ENCODE measurements at regions of chr15 and their contacts with region 1.

Region 1: DNA sequence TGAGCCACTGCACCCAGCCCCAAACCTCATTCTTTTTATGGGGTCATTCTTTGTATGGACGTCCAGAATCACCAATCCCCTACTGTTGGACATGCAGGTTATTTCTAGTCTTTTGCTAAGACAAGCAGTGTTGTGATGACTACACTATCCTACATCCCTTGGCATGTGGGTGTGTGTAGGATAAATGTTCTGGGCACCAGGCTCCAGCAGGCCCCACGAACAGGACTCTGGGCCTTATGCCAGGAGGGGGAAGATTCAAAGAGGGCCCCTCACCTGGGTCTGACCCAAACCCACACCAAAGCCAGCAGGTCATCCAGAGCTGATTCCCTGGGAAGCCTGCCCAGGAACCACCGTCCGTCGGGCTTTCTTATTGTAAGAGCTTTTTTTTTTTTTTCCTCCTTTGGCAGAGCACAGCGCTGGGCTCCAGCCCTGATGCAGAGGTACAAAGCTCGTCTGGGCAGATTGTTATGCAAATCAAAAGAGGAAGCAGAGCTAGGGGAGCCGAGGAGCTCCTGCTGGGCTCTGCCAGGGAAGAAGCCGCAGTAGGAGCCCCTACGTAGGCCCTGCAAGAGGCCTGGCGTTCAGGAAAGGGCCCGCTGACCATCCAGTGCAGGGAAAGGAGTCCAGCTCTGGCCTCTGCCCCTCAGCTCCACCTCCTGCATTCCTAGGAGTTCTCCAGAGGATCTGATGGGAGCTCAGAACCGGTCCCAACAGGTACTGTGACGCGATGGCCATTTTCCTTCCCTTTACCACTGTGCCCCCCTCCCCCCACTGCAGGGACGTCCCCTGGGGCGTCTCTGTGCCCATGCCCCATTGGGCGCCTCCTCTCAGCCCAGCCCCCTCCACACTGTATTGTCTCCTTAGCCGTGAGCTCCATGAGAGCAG is 29.0 kb upstream of the FURIN start:
- DNase-seq: no peak
- ATAC-seq: peak; percentile 52 to 75 (median 68)
- H3K4me3 ChIP-seq: peak overlapping the region in 3 of 12 donors; percentile 13 to 45 (median 15)
- H3K27ac ChIP-seq: peak overlapping the region in 1 of 12 donors; percentile 88
- H3K4me1 ChIP-seq: peaks cover 0 to 44% (median 0%) of the 10 kb centered on the region in 12 donors
- H3K27me3 ChIP-seq: no peaks in the 10 kb centered on the region
- CTCF ChIP-seq: no peak
- POLR2A ChIP-seq: no peak

Region 2: DNA sequence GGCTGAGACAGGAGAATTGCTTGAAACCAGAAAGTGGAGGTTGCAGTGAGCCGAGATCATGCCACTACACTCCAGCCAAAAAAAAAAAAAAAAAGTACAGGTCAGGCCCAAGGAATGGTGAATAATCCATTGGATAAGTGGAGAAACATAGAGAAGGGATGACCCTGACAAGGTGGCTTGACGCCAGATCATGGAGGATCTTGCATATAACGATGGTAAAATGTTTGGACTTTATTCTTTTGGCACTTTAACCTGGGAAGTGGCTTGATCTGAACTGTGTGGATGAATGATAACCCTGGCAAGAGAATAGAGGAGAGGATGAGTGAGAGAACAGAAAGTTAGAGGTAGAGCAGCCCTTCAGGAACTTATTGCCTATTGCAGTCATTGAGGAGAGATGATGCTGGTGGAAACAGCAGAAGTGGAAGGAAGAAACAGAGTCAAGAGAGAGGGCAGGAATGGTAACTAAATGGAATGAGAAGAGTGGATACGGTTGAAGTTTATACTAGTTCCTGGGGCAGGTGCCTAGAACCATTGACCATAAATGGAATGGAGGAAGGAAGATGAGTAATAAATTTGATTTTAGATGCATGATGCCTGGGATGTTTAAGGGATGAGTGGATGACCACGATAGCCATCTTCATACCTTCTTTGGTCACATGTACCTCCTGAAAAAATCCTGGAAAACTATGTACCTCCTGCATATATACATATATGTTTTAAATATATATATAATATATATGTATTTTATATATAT is 64.5 kb before region 1 on chr15:
- intact Hi-C with region 1: loop called in 1 of 10 experiments (anchors 10 kb)
- DNase-seq: no peak
- ATAC-seq: no peak
- H3K4me3 ChIP-seq: no peak overlapping the region
- H3K27ac ChIP-seq: no peak overlapping the region
- H3K4me1 ChIP-seq: peaks cover 0 to 8% (median 0%) of the 10 kb centered on the region in 12 donors
- H3K27me3 ChIP-seq: no peaks in the 10 kb centered on the region
- CTCF ChIP-seq: no peak
- POLR2A ChIP-seq: no peak